ENCODE measurements at regions of chr19 and their contacts with region 1.

Region 1: GRCh38 chr19:51108066-51108804 is at the start of gene CTU1:
- DNase-seq: peak; percentile 98
- H3K4me3 Mint-ChIP-seq: peak within 1 kb of the TSS; percentile 92
- H3K27ac Mint-ChIP-seq: peak within 1 kb of the TSS; percentile 96
- H3K4me1 Mint-ChIP-seq: peaks cover 24% of the 10 kb centered on the region
- H3K27me3 Mint-ChIP-seq: no peaks in the 10 kb centered on the region
- total RNA-seq, gene CTU1: 12.5 and 14.0 TPM in 2 replicates

Region 2: GRCh38 chr19:50724522-50725217 is 383.6 kb before region 1 on chr19:
- intact Hi-C with region 1: loop called (anchors 5 kb)
- DNase-seq: peak; percentile 97
- H3K4me3 Mint-ChIP-seq: peak overlapping the region; percentile 85
- H3K27ac Mint-ChIP-seq: peak overlapping the region; percentile 78
- H3K4me1 Mint-ChIP-seq: no peaks in the 10 kb centered on the region
- H3K27me3 Mint-ChIP-seq: peaks cover 38% of the 10 kb centered on the region

Region 3: GRCh38 chr19:50969411-50969756 is 138.9 kb before region 1 on chr19 and contains the start of gene KLK6:
- intact Hi-C with region 1: no loop called
- DNase-seq: no peak
- H3K4me3 Mint-ChIP-seq: no peak within 1 kb of the TSS
- H3K27ac Mint-ChIP-seq: no peak within 1 kb of the TSS
- H3K4me1 Mint-ChIP-seq: no peaks in the 10 kb centered on the region
- H3K27me3 Mint-ChIP-seq: no peaks in the 10 kb centered on the region
- total RNA-seq, gene KLK6: not detected in 2 replicates

Region 4: GRCh38 chr19:51097166-51097738 is 11.0 kb before region 1 on chr19:
- intact Hi-C with region 1: loop called (anchors 1 kb)
- DNase-seq: peak; percentile 27
- H3K4me3 Mint-ChIP-seq: no peak overlapping the region
- H3K27ac Mint-ChIP-seq: peak overlapping the region; percentile 16
- H3K4me1 Mint-ChIP-seq: peaks cover 14% of the 10 kb centered on the region
- H3K27me3 Mint-ChIP-seq: no peaks in the 10 kb centered on the region

Region 5: GRCh38 chr19:51367565-51368365 is 259.5 kb after region 1 on chr19:
- intact Hi-C with region 1: loop called (anchors 1 kb)
- DNase-seq: peak; percentile 95
- H3K4me3 Mint-ChIP-seq: peak overlapping the region; percentile 98
- H3K27ac Mint-ChIP-seq: peak overlapping the region; percentile 96
- H3K4me1 Mint-ChIP-seq: peaks cover 68% of the 10 kb centered on the region
- H3K27me3 Mint-ChIP-seq: no peaks in the 10 kb centered on the region

Region 6: GRCh38 chr19:51593969-51594773 is 485.9 kb after region 1 on chr19:
- intact Hi-C with region 1: loop called (anchors 1 kb)
- DNase-seq: peak; percentile 95
- H3K4me3 Mint-ChIP-seq: peak overlapping the region; percentile 92
- H3K27ac Mint-ChIP-seq: peak overlapping the region; percentile 78
- H3K4me1 Mint-ChIP-seq: peaks cover 20% of the 10 kb centered on the region
- H3K27me3 Mint-ChIP-seq: no peaks in the 10 kb centered on the region

Measured in activated T-helper 1 cell treated with anti-CD3 and anti-CD28 coated beads, Interleukin-12 subunit alpha, Interleukin-12 subunit beta, Interleukin-2, Interleukin-4 antibody, amounts not matched to agents 30 ng/mL and 10 ng/mL and 1 ng/mL, durations not matched to agents 14 hours and 24 hours and 36 hours (primary cell).